Caco-2 (cell line): ENCODE measurements at regions of chr15 and their contacts with region 1.

Region 1: DNA sequence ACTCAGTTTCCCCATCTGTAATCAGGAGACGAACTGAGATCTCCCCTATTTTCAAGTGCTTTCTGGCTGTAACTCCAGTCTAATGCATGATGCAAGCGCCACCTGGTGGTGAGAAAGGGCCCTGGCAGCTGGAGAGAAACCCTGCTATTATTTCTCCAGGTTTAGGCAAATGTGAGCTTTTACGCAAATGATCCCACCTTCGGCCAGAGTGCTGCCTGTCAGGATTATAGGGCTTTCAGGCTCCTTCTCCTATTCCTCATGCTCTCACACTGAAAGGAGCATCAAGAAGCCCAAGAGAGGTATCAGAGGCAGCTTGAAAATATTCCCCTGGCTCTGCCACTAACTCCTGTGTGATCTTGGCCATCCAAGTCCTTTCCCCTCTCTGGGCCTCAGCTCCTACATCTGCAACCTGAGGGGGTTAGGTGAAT is 93.9 kb upstream of the RASGRF1 start:
- DNase-seq: peak; percentile 60 to 73
- H3K4me3 ChIP-seq: no peak overlapping the region
- H3K4me3 Mint-ChIP-seq: no peak overlapping the region
- H3K27ac Mint-ChIP-seq: no peak overlapping the region
- H3K4me1 ChIP-seq: peaks cover 5% of the 10 kb centered on the region
- H3K4me1 Mint-ChIP-seq: peaks cover 2% of the 10 kb centered on the region
- H3K27me3 ChIP-seq: no peaks in the 10 kb centered on the region
- H3K27me3 Mint-ChIP-seq: peaks cover 7% of the 10 kb centered on the region
- CTCF ChIP-seq: peak; percentile 90 to 91

Region 2: GRCh38 chr15:78909791-78910228 is 274.7 kb before region 1 on chr15:
- CTCF ChIA-PET with region 1: no interaction called
- POLR2A ChIA-PET with region 1: no interaction called
- intact Hi-C with region 1: loop called (anchors 5 kb)
- DNase-seq: peak in 1 of 2 experiments; percentile 63
- H3K4me3 ChIP-seq: no peak overlapping the region
- H3K4me3 Mint-ChIP-seq: no peak overlapping the region
- H3K27ac Mint-ChIP-seq: no peak overlapping the region
- H3K4me1 ChIP-seq: no peaks in the 10 kb centered on the region
- H3K4me1 Mint-ChIP-seq: no peaks in the 10 kb centered on the region
- H3K27me3 ChIP-seq: no peaks in the 10 kb centered on the region
- H3K27me3 Mint-ChIP-seq: no peaks in the 10 kb centered on the region
- CTCF ChIP-seq: peak; percentile 52 to 68

Region 3: DNA sequence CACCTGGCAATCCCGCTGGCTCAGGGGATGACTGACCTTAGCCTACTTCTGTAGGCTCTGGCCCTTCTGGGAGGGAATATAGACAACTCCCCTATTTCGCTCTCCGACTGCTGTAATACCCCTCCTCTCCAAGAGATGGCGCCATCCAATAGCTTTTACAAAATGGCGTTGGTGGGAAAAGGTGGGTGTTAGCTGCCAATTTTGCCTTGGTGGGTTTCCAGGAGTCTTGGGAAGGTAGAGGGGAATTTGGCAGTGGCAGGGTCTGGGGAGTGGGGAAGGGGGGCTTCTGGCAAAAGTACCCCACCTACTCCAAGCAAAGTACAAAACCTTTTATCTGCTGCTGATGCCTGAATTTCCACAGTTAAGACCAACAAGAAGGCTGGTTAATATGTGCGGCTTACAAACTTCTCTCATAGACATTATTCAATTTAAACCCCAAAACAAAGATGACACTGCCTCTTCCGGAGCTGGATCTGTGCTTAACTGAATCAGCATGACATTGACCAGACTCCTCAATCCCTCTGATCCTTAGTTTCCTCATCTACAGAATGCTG is 156.0 kb before region 1 on chr15:
- CTCF ChIA-PET with region 1: interaction called, 52 read pairs
- POLR2A ChIA-PET with region 1: no interaction called
- intact Hi-C with region 1: loop called (anchors 1 kb)
- DNase-seq: peak in 1 of 2 experiments; percentile 61
- H3K4me3 ChIP-seq: no peak overlapping the region
- H3K4me3 Mint-ChIP-seq: no peak overlapping the region
- H3K27ac Mint-ChIP-seq: no peak overlapping the region
- H3K4me1 ChIP-seq: no peaks in the 10 kb centered on the region
- H3K4me1 Mint-ChIP-seq: no peaks in the 10 kb centered on the region
- H3K27me3 ChIP-seq: no peaks in the 10 kb centered on the region; the same call in 1 of the 2 replicates
- H3K27me3 Mint-ChIP-seq: no peaks in the 10 kb centered on the region
- CTCF ChIP-seq: peak; percentile 80 to 88

Region 4: GRCh38 chr15:79130535-79131130 is 53.8 kb before region 1 on chr15:
- CTCF ChIA-PET with region 1: interaction called, 12 read pairs
- POLR2A ChIA-PET with region 1: no interaction called
- intact Hi-C with region 1: loop called (anchors 1 kb)
- DNase-seq: no peak
- H3K4me3 ChIP-seq: no peak overlapping the region
- H3K4me3 Mint-ChIP-seq: no peak overlapping the region
- H3K27ac Mint-ChIP-seq: no peak overlapping the region
- H3K4me1 ChIP-seq: no peaks in the 10 kb centered on the region
- H3K4me1 Mint-ChIP-seq: no peaks in the 10 kb centered on the region
- H3K27me3 ChIP-seq: no peaks in the 10 kb centered on the region
- H3K27me3 Mint-ChIP-seq: peaks cover 9% of the 10 kb centered on the region
- CTCF ChIP-seq: peak; percentile 33 to 34